CD4-positive, alpha-beta memory T cell (primary cell): ENCODE measurements at regions of chr17 and their contacts with region 1.

Region 1: GRCh38 chr17:30104575-30105339 is 11.9 kb upstream of the NSRP1 start:
- DNase-seq: peak; percentile 57 to 69 (median 64)
- H3K4me3 ChIP-seq: peak overlapping the region; percentile 32 to 50
- H3K4me3 Mint-ChIP-seq: peak overlapping the region; percentile 81 to 89 (median 84)
- H3K27ac ChIP-seq: no peak overlapping the region
- H3K27ac Mint-ChIP-seq: peak overlapping the region in 5 of 7 donors; percentile 0 to 74 (median 65)
- H3K4me1 ChIP-seq: peaks cover 15% of the 10 kb centered on the region
- H3K4me1 Mint-ChIP-seq: peaks cover 5 to 7% (median 5%) of the 10 kb centered on the region in 4 donors
- H3K27me3 ChIP-seq: no peaks in the 10 kb centered on the region
- H3K27me3 Mint-ChIP-seq: peaks cover 2 to 4% of the 10 kb centered on the region in 2 donors

Region 2: GRCh38 chr17:30116661-30117551 is 12.1 kb after region 1 on chr17 and contains the start of gene NSRP1:
- CTCF ChIA-PET with region 1: interaction called, 101 read pairs
- POLR2A ChIA-PET with region 1: interaction called, 10 read pairs
- intact Hi-C with region 1: no loop called
- DNase-seq: peak; percentile 90 to 93 (median 90)
- H3K4me3 ChIP-seq: peak within 1 kb of the TSS; percentile 95 to 100
- H3K4me3 Mint-ChIP-seq: peak within 1 kb of the TSS; percentile 95 to 100 (median 98)
- H3K27ac ChIP-seq: peak within 1 kb of the TSS; percentile 94
- H3K27ac Mint-ChIP-seq: peak within 1 kb of the TSS; percentile 94 to 100 (median 99)
- H3K4me1 ChIP-seq: peaks cover 36% of the 10 kb centered on the region
- H3K4me1 Mint-ChIP-seq: peaks cover 28 to 54% (median 39%) of the 10 kb centered on the region in 4 donors
- H3K27me3 ChIP-seq: no peaks in the 10 kb centered on the region
- H3K27me3 Mint-ChIP-seq: peaks cover under 1% of the 10 kb centered on the region in 2 donors
- total RNA-seq, gene NSRP1: 31.5 to 32.2 TPM

Region 3: GRCh38 chr17:30153463-30153862 is 48.7 kb after region 1 on chr17:
- CTCF ChIA-PET with region 1: interaction called, 11 read pairs
- POLR2A ChIA-PET with region 1: no interaction called
- intact Hi-C with region 1: no loop called
- DNase-seq: no peak
- H3K4me3 ChIP-seq: no peak overlapping the region
- H3K4me3 Mint-ChIP-seq: no peak overlapping the region
- H3K27ac ChIP-seq: no peak overlapping the region
- H3K27ac Mint-ChIP-seq: peak overlapping the region in 2 of 7 donors; percentile 53 to 61
- H3K4me1 ChIP-seq: no peaks in the 10 kb centered on the region
- H3K4me1 Mint-ChIP-seq: peaks cover 21 to 36% (median 28%) of the 10 kb centered on the region in 4 donors
- H3K27me3 ChIP-seq: no peaks in the 10 kb centered on the region
- H3K27me3 Mint-ChIP-seq: no peaks in the 10 kb centered on the region

Region 4: GRCh38 chr17:30291543-30292285 is 187.0 kb after region 1 on chr17 and contains the start of gene BLMH:
- CTCF ChIA-PET with region 1: interaction called, 15 read pairs
- POLR2A ChIA-PET with region 1: interaction called, 8 read pairs
- intact Hi-C with region 1: loop called (anchors 5 kb)
- DNase-seq: peak; percentile 68 to 82 (median 76)
- H3K4me3 ChIP-seq: peak within 1 kb of the TSS; percentile 77 to 80
- H3K4me3 Mint-ChIP-seq: peak within 1 kb of the TSS; percentile 89 to 97 (median 96)
- H3K27ac ChIP-seq: peak within 1 kb of the TSS; percentile 68
- H3K27ac Mint-ChIP-seq: peak within 1 kb of the TSS; percentile 87 to 94 (median 92)
- H3K4me1 ChIP-seq: peaks cover 24% of the 10 kb centered on the region
- H3K4me1 Mint-ChIP-seq: peaks cover 17 to 20% (median 18%) of the 10 kb centered on the region in 4 donors
- H3K27me3 ChIP-seq: no peaks in the 10 kb centered on the region
- H3K27me3 Mint-ChIP-seq: no peaks in the 10 kb centered on the region
- total RNA-seq, gene BLMH: 54.0 to 57.6 TPM

Region 5: DNA sequence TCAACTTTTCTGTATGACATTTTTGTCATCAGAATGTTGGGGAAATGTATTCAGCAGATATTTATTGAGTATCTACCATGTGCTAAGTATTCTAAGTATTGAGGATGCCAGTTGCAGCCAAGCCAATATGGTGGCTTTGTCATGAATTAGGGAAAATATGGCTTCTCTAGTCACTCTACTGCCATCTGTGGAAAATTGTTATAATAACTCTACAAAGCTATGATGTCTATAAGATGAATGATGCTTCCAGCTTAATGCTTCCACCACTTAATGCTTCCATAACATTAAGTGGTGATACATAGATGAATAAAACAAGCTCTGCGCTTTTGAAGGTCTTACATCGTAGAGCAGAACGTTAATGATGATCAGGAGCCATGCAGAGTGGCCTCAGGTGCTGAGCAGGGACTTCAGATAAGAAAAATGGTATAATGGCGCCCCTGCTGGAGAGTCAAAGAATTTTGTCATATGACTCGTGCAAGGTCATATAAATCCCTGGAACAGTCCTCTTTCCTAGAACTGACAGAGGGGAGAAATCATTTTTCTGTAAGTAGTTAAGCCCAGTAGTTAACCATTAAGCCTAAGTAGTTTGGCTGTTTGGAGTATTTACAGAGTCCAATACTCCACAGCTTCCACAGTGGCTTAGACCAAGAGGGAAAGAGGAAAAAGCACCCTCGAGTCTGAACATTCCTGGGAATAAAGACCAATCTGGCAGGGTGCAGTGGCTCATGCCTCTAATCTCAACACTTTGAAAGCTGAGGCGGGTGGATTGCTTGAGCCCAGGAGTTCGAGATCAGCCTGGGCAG is 231.8 kb after region 1 on chr17:
- CTCF ChIA-PET with region 1: interaction called, 160 read pairs
- POLR2A ChIA-PET with region 1: interaction called, 10 read pairs
- intact Hi-C with region 1: loop called (anchors 1 kb)
- DNase-seq: peak; percentile 56 to 79 (median 76)
- H3K4me3 ChIP-seq: no peak overlapping the region
- H3K4me3 Mint-ChIP-seq: peak overlapping the region in 2 of 8 donors; percentile 64 to 68
- H3K27ac ChIP-seq: no peak overlapping the region
- H3K27ac Mint-ChIP-seq: peak overlapping the region in 4 of 7 donors; percentile 5 to 80 (median 58)
- H3K4me1 ChIP-seq: peaks cover 24% of the 10 kb centered on the region
- H3K4me1 Mint-ChIP-seq: peaks cover 30 to 47% (median 38%) of the 10 kb centered on the region in 4 donors
- H3K27me3 ChIP-seq: no peaks in the 10 kb centered on the region
- H3K27me3 Mint-ChIP-seq: no peaks in the 10 kb centered on the region

Region 6: GRCh38 chr17:30716461-30717300 is 611.9 kb after region 1 on chr17:
- CTCF ChIA-PET with region 1: interaction called, 3 read pairs
- POLR2A ChIA-PET with region 1: no interaction called
- intact Hi-C with region 1: loop called (anchors 5 kb)
- DNase-seq: peak in 1 of 5 donors; percentile 27
- H3K4me3 ChIP-seq: no peak overlapping the region
- H3K4me3 Mint-ChIP-seq: no peak overlapping the region
- H3K27ac ChIP-seq: no peak overlapping the region
- H3K27ac Mint-ChIP-seq: peak overlapping the region in 1 of 7 donors; percentile 27
- H3K4me1 ChIP-seq: no peaks in the 10 kb centered on the region
- H3K4me1 Mint-ChIP-seq: peaks cover 5 to 11% (median 6%) of the 10 kb centered on the region in 4 donors
- H3K27me3 ChIP-seq: no peaks in the 10 kb centered on the region
- H3K27me3 Mint-ChIP-seq: no peaks in the 10 kb centered on the region